ENCODE measurements at regions of chr14 and their contacts with region 1.

Region 1: DNA sequence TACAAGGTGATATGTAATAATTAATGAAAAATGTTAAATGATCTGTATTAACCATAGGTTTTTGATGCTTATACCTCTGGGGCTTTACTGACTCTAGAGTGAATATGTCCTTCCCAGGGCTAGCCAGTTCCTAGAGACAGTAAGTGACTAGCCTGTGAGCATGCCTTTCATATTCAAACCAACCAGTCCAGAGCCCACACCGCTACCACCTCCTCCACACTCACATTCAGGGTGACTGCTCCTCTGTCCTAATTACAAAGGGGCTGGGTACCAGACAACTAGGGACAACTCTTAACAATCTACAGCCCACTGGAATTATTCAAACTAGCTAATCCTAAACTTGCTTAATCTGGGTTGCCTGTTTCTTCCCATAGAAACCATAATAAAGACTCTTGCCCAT is 49.0 kb downstream of the RALGAPA1 start:
- DNase-seq: no peak
- ATAC-seq: no peak
- H3K4me3 ChIP-seq: no peak overlapping the region
- H3K27ac ChIP-seq: no peak overlapping the region
- H3K4me1 ChIP-seq: no peaks in the 10 kb centered on the region
- H3K27me3 ChIP-seq: no peaks in the 10 kb centered on the region
- CTCF ChIP-seq: no peak
- POLR2A ChIP-seq: no peak
- RAD21 ChIP-seq: no peak

Region 2: DNA sequence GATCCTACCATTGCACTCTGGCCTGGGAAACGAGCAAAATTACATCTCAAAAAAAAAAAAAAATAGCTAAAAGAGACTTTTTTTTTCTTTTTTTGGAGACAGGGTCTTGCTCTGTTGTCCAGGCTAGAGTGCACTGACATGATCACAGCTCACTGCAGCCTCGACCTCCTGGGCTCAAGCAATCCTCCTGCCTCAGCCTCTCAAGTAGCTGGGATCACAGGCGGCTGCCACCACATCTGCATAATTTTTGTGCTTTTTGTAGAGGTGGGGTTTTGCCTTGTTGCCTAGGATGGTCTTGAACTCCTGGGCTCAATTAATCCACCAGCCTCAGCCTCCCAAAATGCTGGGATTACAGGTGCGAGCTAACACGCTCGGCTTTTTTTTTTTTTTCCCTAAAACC is 37.7 kb after region 1 on chr14:
- CTCF ChIA-PET with region 1: no interaction called
- POLR2A ChIA-PET with region 1: no interaction called
- RAD21 ChIA-PET with region 1: no interaction called
- intact Hi-C with region 1: loop called (anchors 2 kb)
- DNase-seq: no peak
- ATAC-seq: no peak
- H3K4me3 ChIP-seq: no peak overlapping the region
- H3K27ac ChIP-seq: no peak overlapping the region
- H3K4me1 ChIP-seq: no peaks in the 10 kb centered on the region
- H3K27me3 ChIP-seq: no peaks in the 10 kb centered on the region
- CTCF ChIP-seq: no peak
- POLR2A ChIP-seq: no peak
- RAD21 ChIP-seq: no peak